ENCODE measurements at regions of chr1 and their contacts with region 1.

Region 1: GRCh38 chr1:16366722-16367257 is at the start of gene SZRD1:
- DNase-seq: peak; percentile 92

Region 2: GRCh38 chr1:16351994-16352841 is 14.6 kb before region 1 on chr1 and contains the start of gene FBXO42:
- CTCF ChIA-PET with region 1: interaction called, 13 read pairs
- POLR2A ChIA-PET with region 1: interaction called, 16 read pairs
- DNase-seq: peak; percentile 95

Region 3: GRCh38 chr1:16451841-16452528 is 85.2 kb after region 1 on chr1:
- CTCF ChIA-PET with region 1: no interaction called
- POLR2A ChIA-PET with region 1: no interaction called
- DNase-seq: no peak